ENCODE measurements at regions of chr17 and their contacts with region 1.

Region 1: GRCh38 chr17:16285957-16286640 is 67.2 kb downstream of the CENPV start:
- H3K4me3 ChIP-seq: peak overlapping the region; percentile 3
- H3K27ac ChIP-seq: peak overlapping the region; percentile 72
- H3K4me1 ChIP-seq: peaks cover 14% of the 10 kb centered on the region
- CTCF ChIP-seq: peak; percentile 61

Region 2: DNA sequence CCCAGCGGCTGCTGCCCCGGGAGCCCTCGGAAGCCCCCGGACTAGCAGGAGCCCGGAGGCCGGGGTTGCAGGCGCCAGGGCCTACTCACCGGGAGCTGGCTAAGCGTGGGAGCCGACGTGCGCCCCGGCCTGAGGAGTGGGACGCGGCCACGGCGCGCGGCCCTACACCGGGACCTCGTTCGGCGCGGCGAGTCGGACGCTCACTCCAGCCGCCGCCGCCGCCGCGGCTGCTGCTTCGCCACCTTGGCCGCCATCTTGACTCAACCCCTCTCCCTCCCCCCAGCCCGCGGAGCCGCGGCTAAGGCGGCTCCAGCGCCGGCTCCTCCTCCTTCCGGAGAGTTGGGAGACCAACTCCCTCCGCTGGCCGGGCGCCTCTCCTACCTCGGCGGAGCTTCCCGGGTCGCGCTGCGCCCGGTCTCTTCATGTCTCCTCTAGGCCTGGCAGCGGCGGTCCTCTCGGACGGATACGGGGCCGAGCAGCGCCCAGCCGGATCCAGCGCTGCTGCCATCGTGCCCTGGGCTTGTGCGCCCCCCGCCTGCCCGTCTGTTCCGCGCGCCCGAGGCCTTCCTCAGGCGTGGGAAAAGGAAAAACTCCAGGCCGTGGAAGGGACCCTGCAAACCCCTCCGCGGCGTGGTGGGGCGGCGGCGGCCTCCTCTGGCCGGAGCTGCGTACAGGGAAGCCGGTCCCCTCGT is 70.7 kb before region 1 on chr17 and contains the start of gene NCOR1:
- CTCF ChIA-PET with region 1: interaction called, 4 read pairs
- POLR2A ChIA-PET with region 1: interaction called, 10 read pairs
- H3K4me3 ChIP-seq: peak within 1 kb of the TSS; percentile 99
- H3K27ac ChIP-seq: peak within 1 kb of the TSS; percentile 91
- H3K4me1 ChIP-seq: peaks cover 12% of the 10 kb centered on the region; the same call in 1 of the 2 replicates
- CTCF ChIP-seq: peak; percentile 92

Region 3: DNA sequence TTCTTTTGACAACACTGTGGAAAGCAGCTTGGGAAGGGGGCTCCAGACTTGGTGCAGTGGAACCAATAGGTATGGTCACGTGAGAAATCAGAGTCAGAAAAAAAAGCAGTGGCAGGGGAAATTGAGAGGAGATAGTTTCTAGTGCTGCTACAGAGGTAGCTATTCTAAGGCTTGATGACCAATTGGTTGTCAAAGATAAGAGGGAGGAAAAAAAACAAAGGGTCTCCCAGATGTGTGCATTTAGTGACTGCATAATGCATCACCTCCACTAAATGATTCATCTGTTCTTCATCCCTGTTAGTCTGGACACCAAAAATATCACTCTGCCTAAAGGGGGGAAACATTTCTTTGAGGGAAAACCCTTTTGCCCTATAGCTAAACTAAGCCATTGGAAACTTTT is 12.6 kb before region 1 on chr17:
- CTCF ChIA-PET with region 1: interaction called, 20 read pairs
- POLR2A ChIA-PET with region 1: no interaction called
- H3K4me3 ChIP-seq: no peak overlapping the region
- H3K27ac ChIP-seq: no peak overlapping the region
- H3K4me1 ChIP-seq: no peaks in the 10 kb centered on the region
- CTCF ChIP-seq: no peak

Region 4: DNA sequence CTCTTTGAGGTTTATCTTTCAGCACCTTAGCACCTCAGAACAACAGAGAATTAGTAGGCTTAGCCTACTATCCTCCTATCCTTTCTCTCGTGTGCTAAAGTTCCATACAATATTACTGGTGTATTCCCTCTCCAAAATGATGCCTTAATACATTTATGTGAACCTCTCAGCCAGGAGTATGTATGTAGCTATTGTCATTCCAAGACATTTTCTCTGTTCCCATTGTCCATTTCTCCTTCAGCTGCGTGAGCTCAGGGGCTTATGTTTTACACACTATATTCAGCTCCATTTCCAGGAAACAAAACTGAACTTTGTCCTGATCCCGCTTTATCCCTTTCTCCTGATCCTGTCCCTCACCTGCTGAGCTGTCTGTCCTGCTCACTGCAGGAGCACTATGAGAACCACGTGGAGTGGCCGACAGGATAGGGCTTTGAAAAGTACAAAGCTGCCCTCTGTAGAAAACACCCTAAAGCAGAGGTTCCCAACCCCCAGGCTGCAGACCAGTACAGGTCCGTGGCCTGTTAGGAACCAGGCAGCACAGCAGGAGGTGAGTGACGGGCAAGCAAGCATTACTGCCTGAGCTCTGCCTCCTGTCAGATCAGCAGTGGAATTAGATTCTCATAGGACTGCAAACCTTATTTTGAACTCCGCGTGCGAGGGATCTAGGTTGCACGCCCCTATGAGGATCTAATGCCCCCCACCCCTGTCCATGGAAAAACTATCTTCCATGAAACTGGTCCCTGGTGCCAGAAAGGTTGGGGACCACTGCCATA is 11.5 kb after region 1 on chr17:
- CTCF ChIA-PET with region 1: interaction called, 10 read pairs
- POLR2A ChIA-PET with region 1: interaction called, 5 read pairs
- H3K4me3 ChIP-seq: no peak overlapping the region
- H3K27ac ChIP-seq: no peak overlapping the region
- H3K4me1 ChIP-seq: no peaks in the 10 kb centered on the region; the same call in 1 of the 2 replicates
- CTCF ChIP-seq: no peak

Region 5: GRCh38 chr17:16304830-16305229 is 18.7 kb after region 1 on chr17:
- CTCF ChIA-PET with region 1: interaction called, 34 read pairs
- POLR2A ChIA-PET with region 1: interaction called, 5 read pairs
- H3K4me3 ChIP-seq: no peak overlapping the region
- H3K27ac ChIP-seq: no peak overlapping the region
- H3K4me1 ChIP-seq: no peaks in the 10 kb centered on the region
- CTCF ChIP-seq: peak; percentile 73

Region 6: DNA sequence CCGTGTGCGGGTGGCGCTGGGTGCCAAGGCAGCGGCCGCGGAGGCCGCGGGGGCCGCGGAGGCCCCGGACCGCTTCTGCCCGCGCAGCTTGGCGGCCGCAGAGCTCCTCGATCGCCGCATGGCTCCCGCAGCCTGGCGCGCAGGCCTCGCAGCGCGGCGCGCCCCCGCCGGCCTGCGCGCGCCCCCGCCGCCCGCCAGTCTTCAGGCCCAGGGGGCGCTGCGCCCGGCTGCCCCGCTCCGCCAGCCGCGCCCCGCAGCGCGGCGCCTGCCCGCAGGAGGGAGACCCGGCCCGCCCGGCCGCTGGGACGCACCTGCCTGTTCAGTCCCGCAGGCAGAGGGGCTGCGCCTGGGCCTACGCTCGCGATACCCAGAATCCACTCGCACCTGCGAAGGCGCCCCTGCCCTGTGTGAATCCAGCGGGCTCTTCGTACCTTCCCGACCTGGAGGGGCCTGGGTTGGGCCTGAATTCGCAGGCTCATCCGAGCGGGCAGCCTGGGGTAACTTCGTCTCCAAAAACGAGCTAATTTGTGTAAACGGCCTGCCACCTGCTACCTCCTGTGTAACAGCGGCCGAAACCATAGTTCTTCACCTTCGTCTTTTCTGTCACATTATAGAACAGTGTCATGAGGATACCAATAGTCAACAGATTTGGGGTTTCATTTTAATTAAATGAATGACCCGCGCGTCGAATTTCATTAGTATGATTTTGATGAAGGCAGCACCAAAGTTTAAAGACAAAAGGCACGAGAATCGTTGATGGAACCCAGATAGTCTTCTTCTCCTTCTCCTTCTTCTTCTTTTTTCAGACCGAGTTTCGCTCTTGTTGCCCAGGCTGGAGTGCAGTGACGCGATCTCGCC is 67.4 kb after region 1 on chr17 and contains the start of gene CENPV:
- CTCF ChIA-PET with region 1: interaction called, 8 read pairs
- POLR2A ChIA-PET with region 1: interaction called, 12 read pairs
- H3K4me3 ChIP-seq: peak within 1 kb of the TSS; percentile 77
- H3K27ac ChIP-seq: peak within 1 kb of the TSS; percentile 97
- H3K4me1 ChIP-seq: peaks cover 3% of the 10 kb centered on the region; the same call in 1 of the 2 replicates
- CTCF ChIP-seq: peak; percentile 19; the same call in 1 of the 2 replicates

Measured in HEK293 (cell line).